Activated CD8-positive, alpha-beta T cell treated with anti-CD3 and anti-CD28 coated beads for 36 hours (primary cell): ENCODE measurements at regions of chr6 and their contacts with region 1.

Region 1: GRCh38 chr6:129448965-129449364 is 261.0 kb downstream of the ARHGAP18 start:
- DNase-seq: no peak
- ATAC-seq: peak; percentile 84
- H3K4me3 Mint-ChIP-seq: no peak overlapping the region
- H3K27ac Mint-ChIP-seq: peak overlapping the region; percentile 75
- H3K4me1 Mint-ChIP-seq: peaks cover 85% of the 10 kb centered on the region
- H3K27me3 Mint-ChIP-seq: no peaks in the 10 kb centered on the region
- CTCF ChIP-seq: no peak

Region 2: GRCh38 chr6:129490521-129491245 is 41.7 kb after region 1 on chr6:
- CTCF ChIA-PET with region 1: interaction called, 4 read pairs
- POLR2A ChIA-PET with region 1: no interaction called
- intact Hi-C with region 1: loop called (anchors 2 kb)
- DNase-seq: peak; percentile 74
- ATAC-seq: peak; percentile 86
- H3K4me3 Mint-ChIP-seq: peak overlapping the region; percentile 63
- H3K27ac Mint-ChIP-seq: peak overlapping the region; percentile 98
- H3K4me1 Mint-ChIP-seq: peaks cover 70% of the 10 kb centered on the region
- H3K27me3 Mint-ChIP-seq: no peaks in the 10 kb centered on the region
- CTCF ChIP-seq: no peak